Activated T-helper 1 cell treated with anti-CD3 and anti-CD28 coated beads, Interleukin-12 subunit alpha, Interleukin-12 subunit beta, Interleukin-2, Interleukin-4 antibody, amounts not matched to agents 30 ng/mL and 10 ng/mL and 1 ng/mL, durations not matched to agents 14 hours and 24 hours and 36 hours (primary cell): ENCODE measurements at regions of chr4 and their contacts with region 1.

Region 1: DNA sequence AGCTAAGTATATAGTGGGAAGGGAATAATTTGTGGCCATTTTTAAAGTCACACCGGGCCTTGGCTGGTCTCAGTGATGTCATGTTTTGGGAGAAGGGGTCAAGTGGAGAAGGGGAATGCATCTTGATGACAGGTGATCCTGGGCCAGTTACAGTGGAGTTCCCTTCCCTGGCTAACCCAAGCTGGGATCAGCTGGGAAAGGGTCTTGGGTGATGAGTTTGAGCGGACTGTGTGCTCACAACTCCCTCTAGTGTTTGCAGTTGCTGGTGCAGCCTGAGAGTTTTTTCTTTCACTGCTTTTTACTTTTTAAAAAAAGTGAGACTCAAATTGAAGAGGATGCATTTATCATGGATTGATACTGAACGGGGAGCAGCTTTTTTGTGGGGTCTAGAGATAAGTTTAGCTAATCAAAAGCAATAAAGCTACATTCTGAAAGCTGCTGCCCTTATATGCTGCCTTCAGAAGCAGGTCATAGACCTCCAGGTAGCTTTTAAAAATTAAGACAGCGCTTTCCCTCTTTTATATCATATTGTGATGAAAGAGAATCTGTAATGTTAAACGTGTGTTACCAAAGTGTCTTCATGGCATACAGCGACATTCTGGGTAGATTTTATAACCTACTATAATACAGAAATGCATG is 164.7 kb downstream of the DCLK2 start:
- DNase-seq: no peak
- H3K4me3 Mint-ChIP-seq: no peak overlapping the region
- H3K27ac Mint-ChIP-seq: no peak overlapping the region
- H3K4me1 Mint-ChIP-seq: no peaks in the 10 kb centered on the region
- H3K27me3 Mint-ChIP-seq: peaks cover 11% of the 10 kb centered on the region

Region 2: DNA sequence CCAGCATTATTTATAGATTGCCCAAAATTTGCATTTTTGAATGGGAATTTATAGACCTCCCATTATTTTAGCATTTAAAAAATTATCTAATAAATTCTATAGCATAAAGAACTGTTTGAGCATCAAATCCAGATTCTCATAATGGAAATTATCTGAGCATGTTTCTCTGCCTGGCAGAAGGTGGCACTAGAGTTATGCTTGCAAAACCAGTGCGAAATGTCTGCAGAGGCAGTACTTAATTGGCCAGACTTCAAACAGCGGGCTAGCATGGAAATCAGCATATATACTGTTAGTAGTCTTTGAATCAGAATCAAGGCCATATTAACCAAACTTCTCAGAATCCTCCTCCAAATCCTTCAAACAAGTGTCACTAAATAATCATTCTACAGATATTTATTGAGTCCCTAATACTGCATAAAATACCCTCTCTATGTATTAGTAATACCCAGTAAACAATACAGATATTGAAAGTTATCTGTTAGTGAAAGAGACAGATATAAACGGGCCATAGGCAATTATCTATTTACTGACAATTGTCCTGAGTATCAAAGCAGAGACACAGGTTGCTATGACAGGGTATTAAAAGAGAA is 243.4 kb before region 1 on chr4:
- intact Hi-C with region 1: loop called (anchors 5 kb)
- DNase-seq: no peak
- H3K4me3 Mint-ChIP-seq: no peak overlapping the region
- H3K27ac Mint-ChIP-seq: no peak overlapping the region
- H3K4me1 Mint-ChIP-seq: peaks cover 6% of the 10 kb centered on the region
- H3K27me3 Mint-ChIP-seq: peaks cover 2% of the 10 kb centered on the region

Region 3: DNA sequence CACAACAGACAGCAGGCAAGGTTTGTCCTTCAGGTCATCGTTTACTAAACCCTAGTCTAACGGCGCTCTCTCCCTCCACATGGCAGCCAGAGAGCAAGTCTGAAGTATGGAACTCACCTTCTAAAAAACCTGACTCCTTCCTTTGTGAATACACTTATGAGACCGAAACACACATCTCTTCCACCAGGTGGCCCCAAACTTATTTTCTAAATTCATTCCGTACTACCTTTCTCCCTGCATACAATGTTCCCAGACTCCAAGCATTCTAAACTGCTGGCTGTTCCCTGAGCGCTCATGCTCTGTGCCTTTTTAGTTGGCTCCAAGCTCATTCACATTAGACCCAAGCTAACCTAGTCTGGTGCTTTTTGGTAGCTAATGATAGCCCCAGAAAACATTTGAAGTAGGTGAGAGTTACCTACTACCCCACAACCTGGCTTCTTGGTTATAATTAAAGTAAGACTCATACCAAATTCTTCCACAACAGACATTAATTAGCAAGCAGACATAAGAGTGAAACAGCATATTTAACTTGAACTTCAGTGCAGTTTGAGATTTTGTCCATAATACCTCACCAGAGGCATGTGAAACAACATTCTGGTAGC is 232.3 kb before region 1 on chr4:
- intact Hi-C with region 1: loop called (anchors 1 kb)
- DNase-seq: no peak
- H3K4me3 Mint-ChIP-seq: no peak overlapping the region
- H3K27ac Mint-ChIP-seq: no peak overlapping the region
- H3K4me1 Mint-ChIP-seq: no peaks in the 10 kb centered on the region
- H3K27me3 Mint-ChIP-seq: peaks cover 9% of the 10 kb centered on the region

Region 4: DNA sequence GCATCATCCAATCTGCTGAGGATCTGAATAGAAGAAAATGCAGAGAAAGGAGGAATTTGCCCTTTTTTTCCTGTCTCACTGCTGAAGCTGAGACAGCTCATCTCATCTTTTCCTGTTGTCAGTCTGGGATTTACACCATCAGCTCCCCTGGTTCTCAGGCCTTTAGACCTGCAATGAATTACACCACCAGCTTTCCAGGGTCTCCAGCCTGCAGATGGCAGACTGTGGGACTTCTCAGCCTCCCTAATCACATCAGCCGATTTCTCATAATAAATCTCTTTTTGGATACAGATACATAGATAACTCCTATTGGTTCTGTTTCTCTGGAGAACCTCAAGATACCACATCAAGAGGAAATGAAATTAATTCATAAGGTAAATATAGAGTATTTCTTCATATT is 204.4 kb after region 1 on chr4:
- intact Hi-C with region 1: no loop called
- DNase-seq: no peak
- H3K4me3 Mint-ChIP-seq: no peak overlapping the region
- H3K27ac Mint-ChIP-seq: no peak overlapping the region
- H3K4me1 Mint-ChIP-seq: no peaks in the 10 kb centered on the region
- H3K27me3 Mint-ChIP-seq: no peaks in the 10 kb centered on the region